ENCODE measurements at regions of chr2 and their contacts with region 1.

Region 1: DNA sequence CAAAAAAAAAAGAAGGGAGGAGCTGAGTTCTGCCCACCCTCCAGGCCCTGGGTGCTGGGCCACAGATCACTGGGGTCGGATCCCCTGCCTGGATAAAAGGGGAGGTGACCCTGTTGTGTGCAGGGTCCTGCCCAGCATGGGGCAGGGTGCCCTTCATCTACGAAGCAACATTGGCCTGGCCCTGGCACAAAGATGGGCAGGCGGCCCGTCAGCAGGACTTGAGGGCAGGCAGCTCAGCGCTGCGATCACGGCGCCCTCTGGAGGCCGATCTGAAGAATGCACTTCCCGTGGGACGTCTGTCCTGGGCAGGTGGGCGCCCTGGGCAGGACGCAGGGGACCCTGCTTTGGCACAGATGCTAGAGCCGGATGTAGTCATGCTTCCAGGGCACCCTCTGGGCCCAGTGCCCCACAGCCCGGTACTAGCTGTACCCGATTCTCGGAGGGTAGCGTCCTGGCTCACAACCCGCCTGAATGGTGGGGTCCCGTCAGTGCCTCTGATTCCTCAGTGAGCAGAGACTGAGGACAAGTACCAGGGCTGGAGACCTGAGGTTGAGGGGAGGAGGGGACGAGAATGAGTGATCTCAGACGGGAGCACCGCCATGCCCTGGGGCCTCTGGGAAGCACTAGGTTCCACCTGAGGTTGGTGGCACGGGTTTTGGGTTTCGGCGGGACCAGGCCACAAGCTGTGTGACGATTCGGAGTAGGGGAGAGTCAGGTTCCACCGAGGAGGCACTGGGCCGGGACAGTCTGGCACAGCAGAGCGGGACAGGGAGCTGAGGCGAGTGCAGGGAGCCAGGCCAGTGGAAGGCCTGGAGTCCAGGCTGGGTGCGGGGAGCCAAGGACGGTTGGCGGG is 18.0 kb downstream of the ARID5A start:
- DNase-seq: peak; percentile 71
- H3K4me3 Mint-ChIP-seq: no peak overlapping the region
- H3K27ac Mint-ChIP-seq: peak overlapping the region; percentile 52
- H3K4me1 Mint-ChIP-seq: peaks cover 32% of the 10 kb centered on the region
- H3K27me3 Mint-ChIP-seq: no peaks in the 10 kb centered on the region

Region 2: DNA sequence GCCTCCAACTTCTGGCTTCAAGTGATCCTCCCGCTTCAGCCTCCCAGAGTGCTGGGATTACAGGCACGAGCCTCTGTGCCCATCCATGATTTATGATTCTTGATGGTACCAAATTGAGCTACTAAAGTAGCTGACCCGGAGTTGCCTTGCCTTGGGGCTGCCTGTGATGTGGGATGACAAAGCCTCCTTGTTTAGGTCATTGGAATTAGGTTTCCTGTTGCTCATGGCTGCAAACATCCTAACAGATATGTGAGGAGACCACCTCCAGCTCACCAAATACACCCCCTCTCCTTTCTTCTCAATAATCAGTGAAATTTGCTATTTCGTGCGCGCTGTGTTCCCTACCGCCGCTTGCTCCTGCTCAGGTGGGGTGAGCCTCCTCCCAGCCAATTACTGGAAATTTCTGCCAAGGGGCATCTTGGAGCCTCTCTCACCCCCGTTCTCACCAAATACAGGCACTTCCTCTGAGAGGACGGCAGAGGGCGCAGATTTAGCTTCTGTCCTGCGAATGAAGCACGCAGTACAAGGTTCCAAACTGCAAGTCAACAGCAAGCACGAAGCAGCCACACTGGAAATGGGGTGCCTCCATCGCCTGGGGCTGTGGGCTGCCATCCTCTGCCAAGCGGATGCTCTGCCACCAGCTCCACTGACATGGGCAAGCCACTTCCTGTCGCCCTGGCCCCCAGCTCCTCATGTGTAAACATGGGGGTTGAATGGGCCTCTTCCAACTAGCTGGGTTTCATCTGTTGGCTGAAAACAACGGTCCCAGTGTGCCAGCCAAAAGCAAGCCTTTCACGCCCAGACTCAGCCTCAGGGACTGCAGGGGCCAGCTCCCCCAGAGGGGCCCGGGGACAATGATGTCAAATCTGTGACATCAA is 147.2 kb before region 1 on chr2:
- CTCF ChIA-PET with region 1: interaction called, 33 read pairs
- POLR2A ChIA-PET with region 1: interaction called, 8 read pairs
- DNase-seq: peak; percentile 83
- H3K4me3 Mint-ChIP-seq: no peak overlapping the region
- H3K27ac Mint-ChIP-seq: peak overlapping the region; percentile 72
- H3K4me1 Mint-ChIP-seq: peaks cover 22% of the 10 kb centered on the region
- H3K27me3 Mint-ChIP-seq: no peaks in the 10 kb centered on the region

Region 3: GRCh38 chr2:96463119-96463518 is 91.4 kb before region 1 on chr2:
- CTCF ChIA-PET with region 1: no interaction called
- POLR2A ChIA-PET with region 1: no interaction called
- DNase-seq: no peak
- H3K4me3 Mint-ChIP-seq: no peak overlapping the region
- H3K27ac Mint-ChIP-seq: no peak overlapping the region
- H3K4me1 Mint-ChIP-seq: no peaks in the 10 kb centered on the region
- H3K27me3 Mint-ChIP-seq: peaks cover 9% of the 10 kb centered on the region

Region 4: GRCh38 chr2:96493072-96493471 is 61.4 kb before region 1 on chr2:
- CTCF ChIA-PET with region 1: no interaction called
- POLR2A ChIA-PET with region 1: no interaction called
- DNase-seq: no peak
- H3K4me3 Mint-ChIP-seq: no peak overlapping the region
- H3K27ac Mint-ChIP-seq: no peak overlapping the region
- H3K4me1 Mint-ChIP-seq: peaks cover 55% of the 10 kb centered on the region
- H3K27me3 Mint-ChIP-seq: no peaks in the 10 kb centered on the region

Region 5: DNA sequence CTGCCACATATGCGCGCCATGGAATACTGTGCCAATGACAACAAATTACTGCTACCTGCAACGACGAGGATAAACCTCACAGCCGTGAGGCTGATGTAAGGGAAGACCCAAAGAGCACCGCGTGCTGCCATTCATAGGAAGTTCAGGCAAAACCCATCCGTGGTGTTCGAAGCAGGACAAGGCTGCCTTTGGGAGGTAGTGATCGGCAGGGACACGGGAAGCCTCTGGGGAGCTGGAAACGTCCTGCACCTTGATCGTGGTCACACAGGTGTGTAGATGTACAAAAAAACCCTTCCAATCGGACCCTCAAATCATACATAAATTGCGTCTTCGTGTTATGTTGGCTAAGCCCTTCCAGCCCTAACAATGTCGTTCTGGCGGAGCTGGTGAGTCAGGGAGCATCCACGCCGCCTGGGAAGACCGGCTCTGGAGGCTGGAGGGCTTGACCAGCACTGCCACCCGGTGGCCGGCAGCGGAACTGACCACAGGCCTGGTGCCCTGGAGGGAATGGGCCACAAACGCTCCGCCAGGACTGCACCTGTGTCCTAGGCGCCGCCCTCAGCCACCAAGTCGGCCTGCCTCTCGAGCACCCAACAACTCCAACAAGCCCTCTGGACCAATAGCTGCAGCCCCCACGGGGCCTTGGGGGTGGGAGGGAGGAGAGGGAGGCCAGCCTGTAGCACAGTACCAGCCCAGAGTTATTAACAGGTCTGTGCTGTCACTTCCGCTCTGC is 45.2 kb before region 1 on chr2:
- CTCF ChIA-PET with region 1: interaction called, 21 read pairs
- POLR2A ChIA-PET with region 1: no interaction called
- DNase-seq: peak; percentile 67
- H3K4me3 Mint-ChIP-seq: no peak overlapping the region
- H3K27ac Mint-ChIP-seq: no peak overlapping the region
- H3K4me1 Mint-ChIP-seq: peaks cover 26% of the 10 kb centered on the region
- H3K27me3 Mint-ChIP-seq: peaks cover 16% of the 10 kb centered on the region

Region 6: GRCh38 chr2:96527286-96528005 is 27.1 kb before region 1 on chr2:
- CTCF ChIA-PET with region 1: interaction called, 15 read pairs
- POLR2A ChIA-PET with region 1: interaction called, 9 read pairs
- DNase-seq: peak; percentile 77
- H3K4me3 Mint-ChIP-seq: peak overlapping the region; percentile 70
- H3K27ac Mint-ChIP-seq: peak overlapping the region; percentile 80
- H3K4me1 Mint-ChIP-seq: peaks cover 94% of the 10 kb centered on the region
- H3K27me3 Mint-ChIP-seq: peaks cover 6% of the 10 kb centered on the region

Region 7: DNA sequence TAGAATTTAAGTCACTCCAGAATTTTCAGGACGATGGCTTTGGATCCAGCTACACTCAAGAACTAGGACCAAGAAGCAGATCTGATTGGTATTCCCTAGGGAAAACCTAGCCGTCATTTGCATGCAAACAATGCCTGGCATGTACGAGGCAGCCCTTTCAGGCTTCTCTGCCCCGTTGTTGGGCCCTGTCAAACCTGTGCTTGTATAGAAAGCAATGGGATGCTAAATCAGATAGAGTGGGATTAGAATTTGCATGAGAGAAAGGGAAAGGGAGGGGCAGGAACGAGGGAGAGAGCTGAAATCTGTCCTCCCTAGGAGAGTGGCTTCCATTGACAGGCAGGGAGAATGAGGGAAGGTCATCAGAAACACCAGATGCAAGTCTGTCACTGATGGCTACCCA is 10.6 kb after region 1 on chr2:
- CTCF ChIA-PET with region 1: interaction called, 19 read pairs
- POLR2A ChIA-PET with region 1: no interaction called
- DNase-seq: no peak
- H3K4me3 Mint-ChIP-seq: no peak overlapping the region
- H3K27ac Mint-ChIP-seq: no peak overlapping the region
- H3K4me1 Mint-ChIP-seq: no peaks in the 10 kb centered on the region
- H3K27me3 Mint-ChIP-seq: peaks cover 6% of the 10 kb centered on the region

Region 8: GRCh38 chr2:96647354-96648235 is 93.1 kb after region 1 on chr2:
- CTCF ChIA-PET with region 1: no interaction called
- POLR2A ChIA-PET with region 1: no interaction called
- DNase-seq: no peak
- H3K4me3 Mint-ChIP-seq: no peak overlapping the region
- H3K27ac Mint-ChIP-seq: no peak overlapping the region
- H3K4me1 Mint-ChIP-seq: no peaks in the 10 kb centered on the region
- H3K27me3 Mint-ChIP-seq: no peaks in the 10 kb centered on the region

Measured in activated CD4-positive, alpha-beta memory T cell treated with anti-CD3 and anti-CD28 coated beads, Interleukin-2, amount 10 ng/mL, durations not matched to agents 7 days and 5 days (primary cell).